Testis (tissue), 5 donors: ENCODE measurements at regions of chr19 and their contacts with region 1.

Region 1: DNA sequence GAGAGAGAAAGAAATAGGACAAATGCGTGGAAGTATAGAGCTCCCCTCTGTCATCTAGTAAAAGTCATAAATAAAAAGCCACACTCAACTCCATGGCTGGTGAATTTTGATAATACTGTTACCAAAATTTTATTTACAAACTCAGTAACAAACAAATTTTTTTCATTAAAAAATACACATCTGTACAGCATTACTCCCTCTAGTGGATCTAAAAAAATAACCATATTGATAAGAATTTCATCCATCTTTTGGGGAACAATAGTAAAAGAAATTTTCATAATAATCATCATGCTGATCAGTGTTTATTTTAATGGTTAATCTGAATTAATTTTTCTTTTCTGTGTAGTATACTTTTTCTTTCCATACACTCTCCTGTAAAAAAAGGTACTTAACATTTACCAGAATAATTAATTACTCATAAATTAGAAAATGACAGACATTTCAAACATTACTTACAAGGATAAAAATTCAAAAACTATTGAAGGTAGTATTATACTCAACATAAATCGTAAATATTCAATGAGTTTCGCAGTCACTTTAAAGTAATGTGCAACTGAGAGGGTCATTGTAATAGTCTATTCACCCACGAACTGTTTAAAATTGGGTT is 173.5 kb upstream of the LSM14A start:
- DNase-seq: no peak
- H3K4me3 ChIP-seq: no peak overlapping the region
- H3K27ac ChIP-seq: no peak overlapping the region
- H3K4me1 ChIP-seq: no peaks in the 10 kb centered on the region
- H3K27me3 ChIP-seq: no peaks in the 10 kb centered on the region
- CTCF ChIP-seq: peak in 2 of 3 experiments; percentile 7 to 44
- POLR2A ChIP-seq: no peak

Region 2: DNA sequence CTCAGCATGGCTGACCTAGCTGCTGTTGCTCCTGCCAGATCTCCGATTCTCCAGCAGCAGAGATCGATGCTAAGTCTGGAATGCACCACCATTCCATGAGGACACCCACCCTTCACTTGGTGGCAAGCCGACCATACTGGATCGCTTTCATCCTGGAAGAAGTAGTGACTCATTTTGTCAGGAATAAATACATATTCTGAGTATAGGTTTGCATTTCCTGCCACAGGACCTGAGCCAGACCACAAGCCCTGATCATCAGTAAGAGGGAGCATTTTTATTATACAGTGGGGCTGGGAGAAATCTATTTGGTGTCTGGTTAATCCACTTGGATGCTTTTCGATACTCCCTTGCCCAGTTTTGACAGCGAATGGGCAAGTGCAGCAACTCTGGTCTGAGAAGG is 213.0 kb before region 1 on chr19:
- intact Hi-C with region 1: loop called (anchors 10 kb)
- DNase-seq: no peak
- H3K4me3 ChIP-seq: no peak overlapping the region
- H3K27ac ChIP-seq: no peak overlapping the region
- H3K4me1 ChIP-seq: peaks cover 5% of the 10 kb centered on the region
- H3K27me3 ChIP-seq: no peaks in the 10 kb centered on the region
- CTCF ChIP-seq: no peak
- POLR2A ChIP-seq: no peak